ENCODE measurements at regions of chr3 and their contacts with region 1.

Region 1: DNA sequence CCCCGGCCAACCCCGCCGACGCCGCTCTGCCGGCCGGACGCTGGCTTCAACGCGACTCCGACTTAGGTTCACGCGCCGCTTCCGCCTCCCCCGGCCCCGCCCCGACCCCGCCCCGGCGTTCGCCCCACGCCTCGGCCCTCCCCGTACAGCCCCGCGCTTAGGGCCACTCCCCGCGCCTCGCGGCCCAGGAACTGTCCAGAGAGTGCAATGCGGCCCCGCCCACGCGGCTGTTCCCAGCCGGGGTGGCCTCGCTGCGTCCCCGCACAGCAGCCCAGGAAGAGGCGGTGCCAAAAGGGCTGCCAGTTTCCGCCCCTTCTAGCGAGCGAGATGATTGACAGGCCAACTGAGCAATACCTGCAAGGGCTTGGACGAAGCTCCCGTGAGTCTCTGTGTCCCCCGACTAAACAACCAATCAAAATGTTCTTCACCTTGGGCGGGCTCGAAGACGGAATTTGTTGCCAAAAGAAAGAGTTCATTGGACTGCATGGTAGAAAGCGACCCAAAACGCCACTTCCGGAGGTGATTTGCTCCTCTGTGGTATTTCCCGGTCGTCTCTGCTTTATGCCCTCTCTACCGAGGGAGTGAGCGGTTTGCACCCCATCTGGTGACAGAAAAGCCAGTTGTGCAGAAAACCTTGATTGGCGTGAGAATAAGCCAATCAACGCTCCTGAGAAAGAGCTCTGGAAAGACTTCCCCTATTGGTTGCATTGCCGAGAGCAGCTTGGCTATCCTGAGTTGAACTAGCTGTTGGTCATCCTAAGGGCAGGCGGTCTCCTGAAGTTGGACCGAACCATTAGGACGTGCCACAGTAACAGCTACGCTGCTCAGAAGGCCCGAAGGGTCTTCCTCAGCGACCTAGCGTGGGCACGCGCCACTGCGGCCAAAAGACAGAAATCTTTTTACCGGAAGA is at the start of gene UBP1:
- DNase-seq: peak; percentile 95
- ATAC-seq: peak; percentile 84
- H3K4me3 Mint-ChIP-seq: peak within 1 kb of the TSS; percentile 100
- H3K27ac Mint-ChIP-seq: peak within 1 kb of the TSS; percentile 100
- H3K4me1 Mint-ChIP-seq: peaks cover 48% of the 10 kb centered on the region
- H3K27me3 Mint-ChIP-seq: no peaks in the 10 kb centered on the region
- CTCF ChIP-seq: no peak
- total RNA-seq, gene UBP1: 50.1 and 68.6 TPM in 2 replicates

Region 2: DNA sequence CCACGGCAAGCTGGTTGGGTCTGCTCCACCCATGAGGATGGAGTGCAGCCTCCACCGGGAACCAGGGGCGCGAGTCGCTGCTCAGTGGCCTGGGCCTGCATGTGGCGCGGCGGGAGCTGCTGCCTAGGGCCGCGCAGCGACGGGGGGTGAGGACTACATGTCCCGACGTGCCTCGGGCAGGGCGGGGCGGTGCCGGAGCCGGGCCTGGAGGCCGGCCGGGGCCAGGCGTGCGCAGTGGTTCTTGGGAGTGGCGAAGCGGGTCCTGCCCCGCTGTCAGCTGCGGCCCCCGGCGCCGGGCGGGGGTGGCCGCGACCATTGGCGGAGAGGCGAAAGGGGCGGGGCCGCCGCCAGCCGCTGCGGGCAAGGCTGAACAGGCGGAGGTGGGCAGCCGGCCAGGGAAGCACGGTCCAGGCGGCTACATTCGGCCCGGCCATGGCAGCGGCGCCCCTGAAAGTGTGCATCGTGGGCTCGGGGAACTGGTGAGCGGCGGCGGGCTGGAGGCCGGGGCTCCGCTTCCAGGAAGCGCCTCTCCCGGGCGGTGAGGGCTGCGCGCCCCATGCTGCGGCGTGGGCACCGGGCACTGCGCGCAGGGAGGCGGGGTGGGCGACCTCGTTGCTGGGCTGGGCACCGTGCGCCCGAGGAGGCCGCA is 1334.2 kb before region 1 on chr3 and contains the start of gene GPD1L:
- CTCF ChIA-PET with region 1: no interaction called
- POLR2A ChIA-PET with region 1: no interaction called
- intact Hi-C with region 1: loop called (anchors 10 kb)
- DNase-seq: peak; percentile 93
- ATAC-seq: peak; percentile 99
- H3K4me3 Mint-ChIP-seq: peak within 1 kb of the TSS; percentile 96
- H3K27ac Mint-ChIP-seq: peak within 1 kb of the TSS; percentile 87
- H3K4me1 Mint-ChIP-seq: peaks cover 18% of the 10 kb centered on the region
- H3K27me3 Mint-ChIP-seq: no peaks in the 10 kb centered on the region
- CTCF ChIP-seq: no peak
- total RNA-seq, gene GPD1L: 8.2 and 9.6 TPM in 2 replicates

Region 3: GRCh38 chr3:32684800-32685542 is 755.6 kb before region 1 on chr3 and contains the start of gene CNOT10:
- CTCF ChIA-PET with region 1: no interaction called
- POLR2A ChIA-PET with region 1: no interaction called
- intact Hi-C with region 1: loop called (anchors 1 kb)
- DNase-seq: peak; percentile 95
- ATAC-seq: peak; percentile 95
- H3K4me3 Mint-ChIP-seq: peak within 1 kb of the TSS; percentile 93
- H3K27ac Mint-ChIP-seq: peak within 1 kb of the TSS; percentile 89
- H3K4me1 Mint-ChIP-seq: peaks cover 31% of the 10 kb centered on the region
- H3K27me3 Mint-ChIP-seq: no peaks in the 10 kb centered on the region
- CTCF ChIP-seq: no peak
- total RNA-seq, gene CNOT10: 48.0 and 55.5 TPM in 2 replicates

Region 4: DNA sequence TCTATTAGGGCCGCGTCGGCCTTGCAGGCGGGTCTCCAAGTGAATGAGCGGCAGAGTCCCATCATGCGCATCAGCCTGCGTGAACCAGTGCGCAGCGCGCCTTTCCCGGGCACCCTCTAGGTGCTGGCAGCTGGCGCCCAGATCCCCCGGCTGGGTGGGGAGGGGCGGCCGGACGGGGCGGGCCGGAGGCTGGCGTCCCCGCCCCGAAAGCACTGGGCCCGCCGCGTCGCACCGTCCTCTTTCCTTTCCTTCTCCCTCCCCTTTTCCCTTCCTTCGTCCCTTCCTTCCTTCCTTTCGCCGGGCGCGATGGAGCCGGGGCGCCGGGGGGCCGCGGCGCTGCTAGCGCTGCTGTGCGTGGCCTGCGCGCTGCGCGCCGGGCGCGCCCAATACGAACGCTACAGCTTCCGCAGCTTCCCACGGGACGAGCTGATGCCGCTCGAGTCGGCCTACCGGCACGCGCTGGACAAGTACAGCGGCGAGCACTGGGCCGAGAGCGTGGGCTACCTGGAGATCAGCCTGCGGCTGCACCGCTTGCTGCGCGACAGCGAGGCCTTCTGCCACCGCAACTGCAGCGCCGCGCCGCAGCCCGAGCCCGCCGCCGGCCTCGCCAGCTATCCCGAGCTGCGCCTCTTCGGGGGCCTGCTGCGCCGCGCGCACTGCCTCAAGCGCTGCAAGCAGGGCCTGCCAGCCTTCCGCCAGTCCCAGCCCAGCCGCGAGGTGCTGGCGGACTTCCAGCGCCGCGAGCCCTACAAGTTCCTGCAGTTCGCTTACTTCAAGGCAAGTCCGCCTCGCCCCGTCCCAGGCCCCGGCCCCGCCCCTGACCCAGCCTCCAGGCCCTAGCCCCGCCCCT is 326.6 kb before region 1 on chr3 and contains the start of gene CRTAP:
- CTCF ChIA-PET with region 1: no interaction called
- POLR2A ChIA-PET with region 1: interaction called, 8 read pairs
- intact Hi-C with region 1: loop called (anchors 1 kb)
- DNase-seq: peak; percentile 91
- ATAC-seq: peak; percentile 83
- H3K4me3 Mint-ChIP-seq: peak within 1 kb of the TSS; percentile 87
- H3K27ac Mint-ChIP-seq: peak within 1 kb of the TSS; percentile 85
- H3K4me1 Mint-ChIP-seq: peaks cover 50% of the 10 kb centered on the region
- H3K27me3 Mint-ChIP-seq: no peaks in the 10 kb centered on the region
- CTCF ChIP-seq: no peak
- total RNA-seq, gene CRTAP: 36.5 and 36.6 TPM in 2 replicates

Region 5: DNA sequence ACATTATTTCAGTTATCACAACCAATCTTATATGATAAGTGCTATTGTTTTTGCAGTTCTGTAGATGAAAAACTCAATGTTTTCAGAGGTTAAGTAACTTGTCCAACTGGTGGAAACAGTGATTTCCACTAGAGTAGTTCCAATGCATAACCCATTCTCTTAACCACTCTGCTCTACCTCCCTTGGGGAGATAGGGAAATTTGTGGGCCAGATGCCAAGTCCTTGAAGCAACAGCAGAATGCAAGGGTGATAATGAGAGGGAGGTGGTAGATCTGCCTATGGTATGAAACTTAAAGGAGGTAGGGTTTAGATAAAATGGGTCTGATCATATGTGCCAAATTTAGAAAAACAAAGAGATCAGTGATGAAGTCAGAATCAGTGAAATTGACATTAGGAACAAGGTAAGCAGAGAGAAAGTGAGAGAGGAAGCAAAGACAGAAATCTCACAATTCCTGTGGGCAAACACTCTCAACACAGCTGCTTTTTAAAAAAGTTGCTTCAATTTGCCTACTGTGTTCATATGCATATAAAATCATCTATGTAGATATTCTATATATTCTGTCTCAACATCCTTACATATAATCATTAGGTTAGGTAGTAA is 50.2 kb after region 1 on chr3:
- CTCF ChIA-PET with region 1: no interaction called
- POLR2A ChIA-PET with region 1: no interaction called
- intact Hi-C with region 1: loop called (anchors 5 kb)
- DNase-seq: no peak
- ATAC-seq: peak; percentile 31
- H3K4me3 Mint-ChIP-seq: no peak overlapping the region
- H3K27ac Mint-ChIP-seq: no peak overlapping the region
- H3K4me1 Mint-ChIP-seq: peaks cover 15% of the 10 kb centered on the region
- H3K27me3 Mint-ChIP-seq: no peaks in the 10 kb centered on the region
- CTCF ChIP-seq: no peak

Region 6: DNA sequence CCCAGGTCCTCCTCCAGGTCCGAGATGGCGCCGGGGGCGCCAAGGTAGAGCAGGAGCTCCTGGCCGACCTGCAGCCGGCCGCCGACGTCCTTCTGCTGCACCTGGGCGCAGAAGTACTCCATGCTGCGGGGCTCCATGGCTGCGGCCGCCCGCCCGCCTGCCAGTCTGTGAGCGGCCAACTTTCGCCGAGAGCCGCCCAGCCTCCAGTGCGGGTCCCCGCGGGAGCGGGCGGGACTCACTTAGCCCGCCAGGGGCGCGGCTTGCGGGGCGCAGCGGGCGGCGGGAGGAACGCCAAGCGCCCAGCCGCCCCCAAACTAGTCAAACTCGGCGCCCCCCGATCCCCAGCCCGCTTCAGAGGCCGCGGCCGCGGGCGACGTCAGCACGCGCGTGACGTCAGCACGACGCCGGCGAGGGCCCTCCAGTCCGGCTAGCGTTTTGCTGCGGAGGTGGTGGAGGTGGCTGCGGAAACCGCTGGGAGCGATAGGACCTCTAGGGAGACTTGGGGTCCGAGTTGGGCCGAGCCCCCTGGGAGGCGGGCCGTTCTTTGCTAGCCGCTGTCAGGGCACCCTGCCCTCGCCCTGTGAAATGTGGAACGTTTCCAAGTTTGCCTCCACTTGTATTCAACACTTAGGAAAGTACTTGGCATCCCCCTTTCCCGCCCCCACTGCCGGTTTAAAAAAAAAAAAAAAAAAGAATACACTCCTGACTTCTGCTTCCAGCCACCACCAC is 277.5 kb after region 1 on chr3 and contains the start of gene CLASP2:
- CTCF ChIA-PET with region 1: no interaction called
- POLR2A ChIA-PET with region 1: interaction called, 7 read pairs
- intact Hi-C with region 1: loop called (anchors 1 kb)
- DNase-seq: peak; percentile 89
- ATAC-seq: peak; percentile 90
- H3K4me3 Mint-ChIP-seq: peak within 1 kb of the TSS; percentile 96
- H3K27ac Mint-ChIP-seq: peak within 1 kb of the TSS; percentile 98
- H3K4me1 Mint-ChIP-seq: peaks cover 12% of the 10 kb centered on the region
- H3K27me3 Mint-ChIP-seq: no peaks in the 10 kb centered on the region
- CTCF ChIP-seq: no peak
- total RNA-seq, gene CLASP2: 73.3 and 85.8 TPM in 2 replicates